Calu3 (cell line): ENCODE measurements at regions of chr3 and their contacts with region 1.

Region 1: DNA sequence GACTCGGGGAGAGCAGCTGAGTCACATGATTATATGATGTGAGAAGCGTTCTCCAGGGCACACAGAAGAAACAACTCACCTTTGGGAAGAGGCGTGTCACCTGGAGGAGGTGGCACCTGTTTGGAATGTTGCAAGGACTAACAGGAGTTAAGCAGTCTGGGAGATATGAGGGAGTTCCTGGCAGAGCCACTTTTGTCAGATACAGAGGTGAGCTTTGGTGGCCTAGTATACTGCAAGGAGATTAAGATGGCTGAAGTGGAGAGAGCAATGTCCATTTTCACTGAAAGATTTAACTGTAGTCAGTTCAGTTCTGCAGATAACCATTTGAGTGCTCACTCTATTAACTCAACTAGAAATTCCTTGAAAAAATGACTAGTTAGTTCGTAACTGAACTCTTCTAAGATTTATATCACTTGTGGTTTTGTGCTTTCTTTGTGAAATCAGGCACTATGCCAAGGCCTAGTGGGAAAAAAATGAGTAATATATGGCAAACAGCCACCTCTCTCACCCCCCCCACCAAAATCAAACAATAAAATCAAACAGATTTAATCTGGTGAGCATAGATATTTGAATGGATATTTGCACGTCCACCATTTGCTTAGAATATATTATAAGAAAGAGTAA is 61.3 kb downstream of the CRYBG3 start:
- DNase-seq: peak; percentile 54
- H3K4me3 Mint-ChIP-seq: peak overlapping the region; percentile 46
- H3K27ac Mint-ChIP-seq: peak overlapping the region; percentile 45
- H3K4me1 Mint-ChIP-seq: peaks cover 20% of the 10 kb centered on the region
- H3K27me3 Mint-ChIP-seq: no peaks in the 10 kb centered on the region
- CTCF ChIP-seq: no peak

Region 2: DNA sequence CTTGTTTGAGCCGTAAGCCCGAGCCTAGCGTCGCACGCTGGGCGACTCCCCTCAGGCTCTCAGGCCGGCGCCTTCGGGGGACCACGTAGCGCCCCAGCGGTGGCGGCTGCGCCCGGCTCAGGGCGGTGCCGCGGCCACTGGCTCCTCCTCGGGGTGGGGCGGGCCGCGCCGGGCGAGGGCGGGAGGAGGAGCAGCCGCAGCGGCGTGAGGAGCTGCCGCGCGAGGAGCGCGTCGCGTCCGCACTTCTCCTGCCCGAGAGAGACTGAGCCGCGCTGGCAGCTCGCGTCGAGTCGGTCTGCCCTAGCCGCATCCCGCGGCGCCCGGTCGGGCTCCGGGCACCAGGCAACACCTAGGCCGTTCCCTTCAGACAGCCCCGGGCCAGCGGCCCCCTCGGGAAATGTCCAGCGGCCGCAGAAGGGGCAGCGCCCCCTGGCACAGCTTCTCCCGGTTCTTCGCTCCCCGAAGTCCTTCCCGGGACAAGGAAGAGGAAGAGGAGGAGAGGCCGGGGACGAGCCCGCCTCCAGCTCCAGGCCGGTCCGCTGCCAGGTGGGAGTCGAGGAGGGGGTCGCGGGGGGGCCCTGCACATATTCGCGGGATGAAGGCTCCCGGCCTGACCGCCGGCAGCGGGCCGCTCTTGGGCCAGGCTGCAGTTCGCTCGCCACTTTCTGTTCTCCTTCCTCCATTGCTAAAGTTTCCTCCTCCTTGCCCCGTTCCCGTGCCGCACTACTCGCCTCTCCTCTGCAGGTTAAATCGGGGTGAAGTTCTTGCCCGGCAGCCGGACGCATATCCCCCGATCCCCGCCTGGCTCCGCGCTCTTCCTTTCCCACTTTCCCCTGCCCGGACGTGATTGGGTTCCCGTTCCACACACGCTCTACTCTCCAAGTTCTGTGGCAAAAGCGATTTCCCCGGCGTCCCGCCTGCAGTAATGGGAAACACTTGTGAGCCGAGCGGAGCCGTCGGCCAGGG is 61.0 kb before region 1 on chr3 and contains the start of gene CRYBG3:
- CTCF ChIA-PET with region 1: no interaction called
- intact Hi-C with region 1: loop called (anchors 5 kb)
- DNase-seq: peak; percentile 85
- H3K4me3 Mint-ChIP-seq: peak within 1 kb of the TSS; percentile 82
- H3K27ac Mint-ChIP-seq: peak within 1 kb of the TSS; percentile 73
- H3K4me1 Mint-ChIP-seq: peaks cover 26% of the 10 kb centered on the region
- H3K27me3 Mint-ChIP-seq: no peaks in the 10 kb centered on the region
- CTCF ChIP-seq: peak; percentile 12
- total RNA-seq, gene CRYBG3: 10.3 and 10.6 TPM in 2 replicates

Region 3: DNA sequence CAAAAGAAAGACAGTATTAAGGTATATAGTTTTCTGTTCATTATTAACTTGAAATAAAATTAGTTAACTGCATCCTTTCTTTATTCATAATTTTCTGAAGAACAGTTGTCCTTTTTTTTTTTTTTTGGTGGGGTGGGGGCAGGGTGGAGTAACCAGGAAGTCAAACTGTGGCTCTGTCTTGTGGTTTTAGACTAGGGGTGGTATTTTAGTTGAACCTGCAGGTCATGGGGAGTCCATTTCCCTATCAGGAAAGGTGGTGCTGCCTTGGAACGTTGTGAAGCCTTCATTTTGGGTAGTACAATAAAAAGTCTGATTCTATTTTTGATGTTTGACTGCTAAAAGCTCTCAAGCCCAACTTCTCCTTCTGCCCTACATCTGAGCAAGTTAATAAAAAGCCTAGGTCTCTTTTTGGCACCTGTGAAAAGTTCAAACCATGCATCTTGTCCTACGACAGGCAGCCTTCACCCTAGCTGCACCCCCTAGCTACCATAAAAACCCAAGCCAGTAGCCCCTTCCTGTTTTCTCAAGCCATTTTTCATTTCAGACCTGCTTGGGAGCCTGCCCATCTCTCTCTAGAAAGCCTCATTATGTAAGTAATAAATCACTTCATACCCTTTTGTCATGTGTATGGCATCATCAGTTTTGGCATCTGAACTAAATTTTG is 120.4 kb after region 1 on chr3:
- CTCF ChIA-PET with region 1: no interaction called
- intact Hi-C with region 1: no loop called
- DNase-seq: no peak
- H3K4me3 Mint-ChIP-seq: no peak overlapping the region
- H3K27ac Mint-ChIP-seq: peak overlapping the region; percentile 18
- H3K4me1 Mint-ChIP-seq: peaks cover 9% of the 10 kb centered on the region
- H3K27me3 Mint-ChIP-seq: no peaks in the 10 kb centered on the region
- CTCF ChIP-seq: no peak

Region 4: GRCh38 chr3:99355465-99355864 is 1472.4 kb after region 1 on chr3:
- CTCF ChIA-PET with region 1: no interaction called
- intact Hi-C with region 1: no loop called
- DNase-seq: no peak
- H3K4me3 Mint-ChIP-seq: no peak overlapping the region
- H3K27ac Mint-ChIP-seq: no peak overlapping the region
- H3K4me1 Mint-ChIP-seq: no peaks in the 10 kb centered on the region
- H3K27me3 Mint-ChIP-seq: no peaks in the 10 kb centered on the region
- CTCF ChIP-seq: no peak